Common myeloid progenitor, CD34-positive (primary cell): ENCODE measurements at regions of chr11 and their contacts with region 1.

Region 1: DNA sequence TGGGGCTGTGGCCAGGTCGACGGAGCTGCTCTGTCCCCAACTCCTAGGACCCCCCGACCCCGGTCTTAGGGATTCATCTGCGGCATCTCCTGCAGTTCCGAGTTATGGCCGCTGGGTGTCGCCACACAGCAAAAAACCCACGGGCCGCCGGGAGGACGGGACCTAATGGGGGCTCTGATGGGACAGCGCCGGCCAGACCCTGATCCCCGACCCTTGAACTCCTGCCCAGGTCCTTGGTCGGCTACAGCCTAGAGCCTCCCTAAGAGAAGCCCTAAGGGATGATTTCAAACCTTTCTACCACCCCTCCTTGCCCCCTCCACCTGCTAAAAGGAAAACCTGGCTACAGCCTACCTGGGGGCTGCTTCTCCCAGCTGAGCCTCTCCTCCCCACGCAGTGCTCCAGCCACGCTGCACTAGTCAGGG is 30.8 kb upstream of the LRRC10B start:
- DNase-seq: peak; percentile 27 to 49 (median 46)
- H3K4me3 ChIP-seq: no peak overlapping the region
- H3K27ac ChIP-seq: no peak overlapping the region
- H3K4me1 ChIP-seq: peaks cover 0 to 7% (median 0%) of the 10 kb centered on the region in 4 experiments
- H3K27me3 ChIP-seq: peaks cover 0 to 5% (median 0%) of the 10 kb centered on the region in 5 experiments

Region 2: GRCh38 chr11:61509043-61510029 is 31.6 kb after region 1 on chr11:
- CTCF ChIA-PET with region 1: interaction called, 453 read pairs
- POLR2A ChIA-PET with region 1: interaction called, 3 read pairs
- DNase-seq: peak; percentile 88 to 94 (median 94)
- H3K4me3 ChIP-seq: peak overlapping the region in 4 of 7 experiments; percentile 26 to 63 (median 45)
- H3K27ac ChIP-seq: no peak overlapping the region
- H3K4me1 ChIP-seq: peaks cover 0 to 22% (median 19%) of the 10 kb centered on the region in 4 experiments
- H3K27me3 ChIP-seq: peaks cover 2 to 66% (median 36%) of the 10 kb centered on the region in 5 experiments